ENCODE measurements at regions of chr11 and their contacts with region 1.

Region 1: GRCh38 chr11:8688414-8689362 is 6.1 kb downstream of the RPL27A start:
- DNase-seq: peak; percentile 96
- ATAC-seq: peak; percentile 87
- H3K4me3 ChIP-seq: peak overlapping the region; percentile 42 to 64 (median 48); a peak in 5 of 6 replicates
- H3K27ac ChIP-seq: peak overlapping the region; percentile 71
- H3K4me1 ChIP-seq: peaks cover 60% of the 10 kb centered on the region
- H3K27me3 ChIP-seq: no peaks in the 10 kb centered on the region
- CTCF ChIP-seq: peak; percentile 84
- EP300 ChIP-seq: peak in 1 of 2 experiments; percentile 56; a peak in 1 of 4 replicates
- POLR2A ChIP-seq: peak; percentile 77 to 96
- RAD21 ChIP-seq: peak; percentile 78; the same call in 1 of the 2 replicates

Region 2: DNA sequence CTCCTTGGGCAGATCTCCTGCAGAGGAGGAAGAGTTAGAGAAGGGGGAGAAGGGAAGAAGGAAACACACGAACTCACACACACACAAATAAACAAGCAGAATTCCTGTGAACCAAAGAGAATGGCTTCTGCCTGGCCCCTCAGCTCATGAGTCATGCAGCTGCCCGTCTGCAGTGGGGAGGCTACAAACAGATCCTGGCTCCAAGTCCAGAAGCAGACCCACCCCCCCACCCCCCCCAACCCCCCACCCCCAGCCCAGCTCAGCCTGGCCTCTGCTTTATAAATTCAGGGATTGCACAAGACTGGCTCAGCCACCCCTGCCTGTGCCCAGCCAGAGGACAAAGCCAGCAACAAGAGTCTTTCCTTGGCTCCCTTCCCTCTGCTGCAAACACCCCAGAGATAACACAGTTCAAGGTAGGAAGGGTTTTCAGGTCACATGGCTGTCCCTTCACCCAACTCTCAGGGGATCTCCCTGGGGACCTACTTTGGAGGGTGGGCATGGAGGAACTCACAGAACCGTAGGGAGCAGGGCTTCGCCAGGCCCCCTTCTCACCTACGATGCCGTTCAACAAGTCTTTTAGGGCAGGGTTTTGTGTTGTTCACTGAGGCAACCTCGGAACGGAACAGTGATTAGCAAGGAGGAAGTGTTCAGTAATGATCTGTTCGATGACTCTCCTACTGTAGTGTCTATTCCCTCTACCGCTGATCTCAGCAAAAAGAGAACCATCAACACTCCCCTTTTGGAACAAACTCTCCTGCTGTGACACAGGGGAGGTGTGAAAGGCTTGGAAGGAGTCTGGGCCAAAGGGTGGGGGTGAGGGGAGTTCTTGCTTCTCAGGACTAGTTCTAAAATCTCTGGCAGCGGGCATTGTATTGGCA is 29.4 kb after region 1 on chr11:
- CTCF ChIA-PET with region 1: no interaction called
- POLR2A ChIA-PET with region 1: interaction called, 12 read pairs
- in situ Hi-C with region 1: no loop called
- intact Hi-C with region 1: no loop called
- DNase-seq: peak; percentile 83
- ATAC-seq: peak; percentile 64
- H3K4me3 ChIP-seq: peak overlapping the region in 1 of 3 experiments; percentile 29; a peak in 2 of 6 replicates
- H3K27ac ChIP-seq: peak overlapping the region; percentile 86
- H3K4me1 ChIP-seq: peaks cover 98% of the 10 kb centered on the region
- H3K27me3 ChIP-seq: no peaks in the 10 kb centered on the region
- CTCF ChIP-seq: no peak
- EP300 ChIP-seq: peak in 1 of 2 experiments; percentile 23; a peak in 1 of 4 replicates
- POLR2A ChIP-seq: peak in 1 of 2 experiments; percentile 39; a peak in 1 of 4 replicates
- RAD21 ChIP-seq: no peak

Region 3: GRCh38 chr11:8794677-8795103 is 106.0 kb after region 1 on chr11:
- CTCF ChIA-PET with region 1: interaction called, 3 read pairs
- POLR2A ChIA-PET with region 1: interaction called, 12 read pairs
- in situ Hi-C with region 1: no loop called
- intact Hi-C with region 1: loop called (anchors 1 kb)
- DNase-seq: peak; percentile 93
- ATAC-seq: peak; percentile 99
- H3K4me3 ChIP-seq: peak overlapping the region; percentile 49 to 73 (median 62)
- H3K27ac ChIP-seq: peak overlapping the region; percentile 75
- H3K4me1 ChIP-seq: peaks cover 50% of the 10 kb centered on the region
- H3K27me3 ChIP-seq: no peaks in the 10 kb centered on the region
- CTCF ChIP-seq: peak; percentile 85
- EP300 ChIP-seq: peak; percentile 37 to 70; a peak in 2 of 4 replicates
- POLR2A ChIP-seq: peak; percentile 65 to 68; a peak in 3 of 4 replicates
- RAD21 ChIP-seq: peak; percentile 85

Region 4: DNA sequence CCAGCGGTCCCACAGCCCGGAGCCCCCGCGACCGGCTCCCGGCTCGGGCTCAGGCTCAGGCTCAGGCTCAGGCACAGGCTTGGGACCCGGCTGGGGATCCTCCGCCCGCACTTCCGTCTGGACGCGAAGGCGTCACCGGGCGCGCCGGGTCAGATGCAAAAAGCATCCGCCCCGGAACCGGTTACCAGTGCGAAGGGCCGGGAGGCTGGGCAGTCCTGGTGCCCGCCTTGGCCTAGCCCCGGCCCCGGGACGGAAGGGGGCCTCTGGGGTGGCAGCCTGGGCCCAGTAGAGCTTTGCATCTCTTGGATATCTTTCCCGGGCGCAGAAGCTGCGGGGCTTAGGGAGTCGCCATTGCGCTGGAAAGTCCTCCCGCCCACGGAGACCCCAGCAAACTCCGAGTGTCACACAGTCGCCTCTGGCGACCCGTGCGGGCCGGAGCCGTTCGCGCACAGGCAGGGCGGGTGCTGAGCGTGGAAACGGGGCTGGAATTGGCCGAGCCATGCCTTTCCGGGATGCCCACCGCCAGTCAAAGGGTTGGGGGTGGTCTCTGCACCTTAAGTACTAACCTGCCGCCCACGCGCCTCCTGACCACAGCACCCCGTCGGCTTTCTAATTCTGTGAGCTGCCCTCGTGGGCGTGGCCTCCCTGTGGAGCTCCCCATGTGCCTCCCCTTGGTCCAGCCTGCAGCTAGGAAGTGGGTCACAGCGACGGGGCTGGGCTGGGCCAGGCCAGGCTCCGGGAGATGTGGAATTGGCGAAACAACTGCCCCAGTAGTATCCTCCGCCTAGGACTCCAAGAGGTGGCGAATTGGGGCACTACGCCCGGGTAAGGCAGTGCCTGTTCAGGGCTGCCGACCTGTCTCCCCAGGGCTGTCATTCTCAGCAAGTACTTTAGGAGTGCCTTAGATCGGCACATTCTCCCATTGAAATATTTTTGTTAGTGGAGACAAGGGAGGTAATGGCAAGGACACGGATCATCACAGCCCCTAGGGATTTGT is 275.9 kb after region 1 on chr11 and contains the start of gene TMEM9B:
- CTCF ChIA-PET with region 1: no interaction called
- POLR2A ChIA-PET with region 1: interaction called, 8 read pairs
- in situ Hi-C with region 1: loop called (anchors 25 kb)
- intact Hi-C with region 1: loop called (anchors 5 kb)
- DNase-seq: peak; percentile 84
- ATAC-seq: peak; percentile 92
- H3K4me3 ChIP-seq: peak within 1 kb of the TSS; percentile 86 to 93 (median 89)
- H3K27ac ChIP-seq: peak within 1 kb of the TSS; percentile 88
- H3K4me1 ChIP-seq: peaks cover 19% of the 10 kb centered on the region
- H3K27me3 ChIP-seq: no peaks in the 10 kb centered on the region
- CTCF ChIP-seq: 0 out of 2 replicates have a peak, but pooled peaks have one; percentile 16
- EP300 ChIP-seq: no peak
- POLR2A ChIP-seq: peak; percentile 76 to 92
- RAD21 ChIP-seq: peak; percentile 46
- total RNA-seq, gene TMEM9B: 17.4 and 20.8 TPM in 2 replicates